ENCODE measurements at regions of chr1 and their contacts with region 1.

Region 1: DNA sequence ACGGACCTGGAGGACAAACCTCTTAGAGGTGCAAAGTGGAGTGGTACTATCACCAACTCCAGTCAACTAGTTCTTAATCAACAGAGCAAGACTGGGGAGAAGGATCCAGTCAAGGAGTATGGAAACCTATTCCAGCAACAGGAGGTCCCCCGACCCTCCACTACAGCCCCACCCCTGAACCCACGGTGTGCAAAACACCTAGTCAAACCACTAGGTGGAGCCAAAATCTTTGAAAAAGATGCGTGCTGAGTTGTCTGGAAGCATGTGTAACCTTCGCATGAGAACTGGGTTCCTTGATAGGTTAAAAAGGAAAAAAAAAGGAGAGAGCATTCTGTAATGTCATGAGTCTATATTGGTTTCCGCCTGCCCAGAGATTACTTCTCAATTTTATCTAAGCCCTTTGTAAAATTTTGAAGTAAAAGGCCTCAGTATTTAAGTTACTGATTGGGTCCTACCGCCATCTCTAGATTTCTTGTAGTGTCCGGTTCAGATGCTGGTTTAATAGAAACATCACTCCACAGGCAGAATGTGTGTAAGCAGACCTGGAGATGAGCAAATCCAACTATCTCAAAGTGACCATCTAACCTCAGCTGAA is 81.9 kb upstream of the HAO2 start:
- DNase-seq: peak; percentile 73
- ATAC-seq: peak; percentile 99
- H3K4me3 ChIP-seq: no peak overlapping the region
- H3K27ac ChIP-seq: no peak overlapping the region
- H3K4me1 ChIP-seq: peaks cover 26% of the 10 kb centered on the region
- H3K27me3 ChIP-seq: no peaks in the 10 kb centered on the region
- CTCF ChIP-seq: peak; percentile 84
- EP300 ChIP-seq: no peak
- POLR2A ChIP-seq: no peak
- RAD21 ChIP-seq: peak; percentile 76

Region 2: GRCh38 chr1:119327436-119328155 is 40.9 kb after region 1 on chr1:
- CTCF ChIA-PET with region 1: no interaction called
- POLR2A ChIA-PET with region 1: no interaction called
- in situ Hi-C with region 1: loop called (anchors 5 kb)
- intact Hi-C with region 1: no loop called
- DNase-seq: peak; percentile 50
- ATAC-seq: peak; percentile 89
- H3K4me3 ChIP-seq: peak overlapping the region; percentile 50 to 75 (median 70)
- H3K27ac ChIP-seq: peak overlapping the region; percentile 74
- H3K4me1 ChIP-seq: peaks cover 35% of the 10 kb centered on the region
- H3K27me3 ChIP-seq: no peaks in the 10 kb centered on the region
- CTCF ChIP-seq: peak; percentile 67
- EP300 ChIP-seq: no peak
- POLR2A ChIP-seq: peak in 1 of 2 experiments; percentile 35; a peak in 1 of 4 replicates
- RAD21 ChIP-seq: no peak

Region 3: DNA sequence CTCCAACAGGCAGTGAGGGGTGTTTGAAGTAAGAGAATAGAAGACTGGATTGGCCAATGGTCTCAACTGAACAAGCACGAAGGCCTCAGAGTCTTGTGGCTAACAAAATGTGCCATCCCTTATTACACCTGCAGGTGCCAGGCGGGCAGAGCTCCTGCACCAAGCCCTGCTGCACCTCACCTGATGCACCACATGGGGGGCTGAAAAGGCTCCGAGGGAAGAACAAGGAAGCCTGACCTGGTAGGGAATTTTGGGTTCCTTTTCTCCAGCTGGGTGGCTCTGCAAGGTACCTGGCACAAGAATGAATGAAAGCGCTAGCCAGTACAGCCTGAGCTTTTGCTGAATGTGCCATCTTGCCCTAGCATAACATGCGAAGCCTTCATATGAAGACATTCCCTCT is 230.0 kb after region 1 on chr1:
- CTCF ChIA-PET with region 1: no interaction called
- POLR2A ChIA-PET with region 1: no interaction called
- in situ Hi-C with region 1: no loop called
- intact Hi-C with region 1: no loop called
- DNase-seq: no peak
- ATAC-seq: peak; percentile 83
- H3K4me3 ChIP-seq: no peak overlapping the region
- H3K27ac ChIP-seq: no peak overlapping the region
- H3K4me1 ChIP-seq: no peaks in the 10 kb centered on the region
- H3K27me3 ChIP-seq: no peaks in the 10 kb centered on the region; a peak in 1 of 5 replicates
- CTCF ChIP-seq: no peak
- EP300 ChIP-seq: no peak
- POLR2A ChIP-seq: no peak
- RAD21 ChIP-seq: no peak

Measured in HepG2 (cell line).